ENCODE measurements at regions of chr3 and their contacts with region 1.

Region 1: DNA sequence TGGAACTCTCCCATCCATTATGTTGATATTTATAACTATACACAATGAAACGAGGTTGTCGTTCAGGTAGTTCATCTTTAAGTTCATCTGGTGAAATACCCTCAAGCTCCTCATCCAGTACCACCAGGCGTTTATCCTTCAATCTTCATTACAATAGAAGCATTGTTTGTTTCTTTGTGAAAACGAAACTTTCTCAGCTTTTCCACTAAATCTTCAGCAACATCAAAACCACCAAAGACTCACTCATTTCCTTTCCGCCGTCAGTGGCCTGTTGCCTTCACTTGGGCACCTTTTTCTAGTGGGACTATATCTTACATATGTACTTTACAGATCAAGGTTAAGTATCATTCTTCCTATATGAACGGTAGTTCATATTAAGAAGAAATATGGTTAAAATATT is 44.1 kb upstream of the TFG start:
- DNase-seq: peak; percentile 57
- H3K4me3 Mint-ChIP-seq: peak overlapping the region; percentile 21
- H3K27ac Mint-ChIP-seq: peak overlapping the region; percentile 45
- H3K4me1 Mint-ChIP-seq: peaks cover 21% of the 10 kb centered on the region
- H3K27me3 Mint-ChIP-seq: no peaks in the 10 kb centered on the region

Region 2: GRCh38 chr3:100650651-100651611 is 14.3 kb before region 1 on chr3:
- CTCF ChIA-PET with region 1: no interaction called
- POLR2A ChIA-PET with region 1: no interaction called
- intact Hi-C with region 1: loop called (anchors 1 kb)
- DNase-seq: peak; percentile 36
- H3K4me3 Mint-ChIP-seq: peak overlapping the region; percentile 18
- H3K27ac Mint-ChIP-seq: peak overlapping the region; percentile 41
- H3K4me1 Mint-ChIP-seq: peaks cover 15% of the 10 kb centered on the region
- H3K27me3 Mint-ChIP-seq: no peaks in the 10 kb centered on the region

Region 3: DNA sequence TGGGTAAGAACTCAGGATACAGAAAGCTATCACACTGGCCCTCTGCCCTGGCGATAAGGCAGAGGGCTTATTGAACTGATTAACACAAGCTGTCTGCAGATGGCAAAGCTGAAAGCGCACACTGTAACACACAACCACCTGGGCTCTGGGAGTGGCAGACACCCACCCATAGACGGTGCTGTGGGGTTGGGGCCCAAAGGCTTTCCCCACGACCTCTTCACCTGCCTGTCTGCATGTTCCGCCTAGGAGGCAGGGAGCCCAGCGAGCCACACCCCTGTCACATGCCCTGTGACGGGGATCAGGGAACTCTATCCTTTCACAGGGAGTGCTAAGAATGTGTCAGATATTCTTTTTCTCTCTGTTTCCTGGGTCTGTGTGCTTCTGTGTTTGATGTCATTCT is 31.9 kb after region 1 on chr3:
- CTCF ChIA-PET with region 1: no interaction called
- POLR2A ChIA-PET with region 1: no interaction called
- intact Hi-C with region 1: no loop called
- DNase-seq: no peak
- H3K4me3 Mint-ChIP-seq: no peak overlapping the region
- H3K27ac Mint-ChIP-seq: no peak overlapping the region
- H3K4me1 Mint-ChIP-seq: no peaks in the 10 kb centered on the region
- H3K27me3 Mint-ChIP-seq: peaks cover 38% of the 10 kb centered on the region

Region 4: DNA sequence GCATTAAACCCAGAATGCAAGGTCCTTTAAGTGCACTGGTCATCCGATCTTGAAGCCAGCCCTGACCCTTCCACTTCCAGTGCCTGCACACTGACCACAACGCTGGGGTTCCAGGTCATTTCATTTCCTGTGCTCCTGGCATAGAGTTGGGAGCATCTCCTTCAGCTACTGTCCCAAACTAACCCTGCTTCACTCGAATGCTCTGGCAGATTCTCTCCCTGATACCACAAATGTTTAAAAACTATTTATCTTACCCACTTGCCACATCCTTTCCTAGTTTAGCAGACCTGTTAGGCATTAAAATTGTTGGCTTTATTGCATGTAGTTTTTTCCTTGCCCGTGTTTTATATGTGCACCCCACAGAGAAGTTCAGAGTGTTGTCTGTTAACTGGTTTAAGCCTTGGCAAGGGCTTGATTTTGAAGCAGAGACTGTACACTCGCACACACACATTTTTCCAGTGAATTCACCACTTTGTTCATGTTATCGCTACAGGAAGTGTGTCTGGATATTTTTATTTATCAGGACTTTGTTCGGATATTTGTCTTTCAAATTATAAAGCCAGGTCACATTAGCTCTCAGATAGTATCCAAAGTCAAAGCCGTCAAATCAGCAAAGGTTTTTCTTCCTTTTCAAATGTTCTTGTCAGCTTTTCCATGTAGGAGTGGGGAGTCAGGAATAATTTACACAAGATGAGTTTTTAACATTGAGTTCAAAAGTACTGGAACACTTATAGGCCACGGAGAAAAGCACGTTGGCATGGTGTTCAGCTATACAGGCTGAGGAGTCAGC is 250.7 kb after region 1 on chr3:
- CTCF ChIA-PET with region 1: no interaction called
- POLR2A ChIA-PET with region 1: no interaction called
- intact Hi-C with region 1: no loop called
- DNase-seq: no peak
- H3K4me3 Mint-ChIP-seq: no peak overlapping the region
- H3K27ac Mint-ChIP-seq: no peak overlapping the region
- H3K4me1 Mint-ChIP-seq: no peaks in the 10 kb centered on the region
- H3K27me3 Mint-ChIP-seq: no peaks in the 10 kb centered on the region